ENCODE measurements at regions of chr2 and their contacts with region 1.

Region 1: DNA sequence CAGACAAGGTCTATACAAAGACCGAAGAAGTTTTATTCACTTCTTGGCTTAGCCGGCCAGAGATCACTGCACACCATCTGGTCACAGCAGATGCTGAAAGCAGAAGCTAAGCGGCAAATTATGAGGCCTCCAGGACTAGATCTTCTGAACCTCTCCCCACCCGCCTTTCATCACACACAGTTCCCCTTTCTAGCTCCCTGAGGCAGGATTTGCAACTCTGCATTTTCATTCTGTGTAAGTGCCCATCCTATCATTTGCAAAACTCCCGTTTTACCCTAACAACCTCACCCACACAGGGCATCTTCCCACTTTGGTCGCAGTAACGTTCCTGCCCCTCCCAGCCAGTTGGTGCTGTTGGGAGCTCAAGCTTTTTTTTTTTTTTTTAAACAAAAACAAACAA is 3.1 kb upstream of the MOB1A start:
- DNase-seq: peak in 1 of 2 donors; percentile 63
- H3K4me3 ChIP-seq: no peak overlapping the region
- H3K27ac ChIP-seq: no peak overlapping the region
- H3K4me1 ChIP-seq: peaks cover 0 to 18% (median 10%) of the 10 kb centered on the region in 4 donors
- H3K27me3 ChIP-seq: no peaks in the 10 kb centered on the region
- CTCF ChIP-seq: no peak

Region 2: DNA sequence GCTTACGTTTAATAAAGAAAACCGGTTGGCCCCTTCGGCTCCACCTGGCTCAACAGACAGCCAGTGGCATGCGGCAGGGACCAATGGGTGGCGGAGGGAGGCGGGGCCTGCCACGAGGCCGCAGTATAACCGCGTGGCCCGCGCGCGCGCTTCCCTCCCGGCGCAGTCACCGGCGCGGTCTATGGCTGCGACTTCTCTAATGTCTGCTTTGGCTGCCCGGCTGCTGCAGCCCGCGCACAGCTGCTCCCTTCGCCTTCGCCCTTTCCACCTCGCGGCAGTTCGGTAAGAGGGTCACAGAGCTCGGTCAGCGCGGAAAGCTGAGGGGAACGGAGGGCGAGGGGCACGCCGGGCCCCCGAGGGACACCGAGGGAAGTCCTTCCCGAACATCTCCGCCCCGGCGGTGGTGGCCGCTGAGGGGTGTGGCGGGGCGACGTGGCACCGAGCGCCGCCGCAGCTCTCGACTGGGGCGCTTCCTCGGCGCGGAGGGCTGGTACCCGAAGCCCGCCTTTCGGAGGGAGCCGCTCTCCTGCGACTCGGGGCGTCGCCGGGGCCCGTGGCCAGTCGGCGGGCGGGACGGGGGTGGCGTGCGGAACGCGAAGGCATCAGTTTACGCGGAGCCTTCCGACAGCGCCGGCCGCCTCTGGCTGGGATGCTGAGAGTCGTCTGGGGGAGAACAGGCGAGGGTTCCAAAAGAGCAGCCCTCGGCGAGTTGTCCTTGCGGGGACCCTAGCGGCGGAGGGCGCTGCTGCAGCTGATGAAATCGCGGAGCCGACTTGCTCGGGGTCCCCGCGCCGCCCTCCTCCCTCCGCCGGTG is 16.9 kb after region 1 on chr2 and contains the start of gene MTHFD2:
- intact Hi-C with region 1: loop called (anchors 2 kb)
- DNase-seq: peak; percentile 89 to 95
- H3K4me3 ChIP-seq: peak within 1 kb of the TSS; percentile 91 to 97
- H3K27ac ChIP-seq: peak within 1 kb of the TSS; percentile 95 to 97
- H3K4me1 ChIP-seq: peaks cover 0 to 40% (median 29%) of the 10 kb centered on the region in 4 donors
- H3K27me3 ChIP-seq: no peaks in the 10 kb centered on the region
- CTCF ChIP-seq: peak; percentile 86 to 90